PC-3 (cell line): ENCODE measurements at regions of chr2 and their contacts with region 1.

Region 1: DNA sequence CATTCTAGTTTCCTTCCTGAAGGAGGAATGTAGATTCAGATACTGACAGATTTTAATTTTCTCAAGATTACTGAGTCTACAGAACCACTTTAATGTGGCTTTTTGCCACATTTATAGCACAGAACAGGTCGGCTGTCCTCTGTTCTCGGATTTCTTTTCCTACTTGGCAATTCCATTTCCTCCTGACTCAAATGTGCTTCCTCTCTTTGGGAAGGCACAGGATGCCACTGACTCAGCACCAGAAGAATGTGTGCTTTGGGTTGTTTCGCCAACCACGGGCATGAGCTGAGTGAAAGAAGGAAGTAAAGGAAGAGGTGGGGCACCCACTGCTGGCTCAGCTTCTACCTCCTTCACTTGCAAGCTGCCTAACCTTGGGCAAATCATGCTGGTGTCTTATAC is 970.6 kb upstream of the ACVR2A start:
- DNase-seq: peak; percentile 98
- ATAC-seq: peak; percentile 95
- H3K4me3 ChIP-seq: peak overlapping the region; percentile 39
- H3K27ac ChIP-seq: peak overlapping the region; percentile 89
- H3K4me1 ChIP-seq: peaks cover 25% of the 10 kb centered on the region
- H3K27me3 ChIP-seq: no peaks in the 10 kb centered on the region
- CTCF ChIP-seq: no peak

Region 2: GRCh38 chr2:146068051-146068450 is 806.2 kb before region 1 on chr2:
- CTCF ChIA-PET with region 1: no interaction called
- POLR2A ChIA-PET with region 1: no interaction called
- intact Hi-C with region 1: no loop called
- DNase-seq: no peak
- ATAC-seq: no peak
- H3K4me3 ChIP-seq: no peak overlapping the region
- H3K27ac ChIP-seq: no peak overlapping the region
- H3K4me1 ChIP-seq: no peaks in the 10 kb centered on the region
- H3K27me3 ChIP-seq: no peaks in the 10 kb centered on the region
- CTCF ChIP-seq: no peak

Region 3: DNA sequence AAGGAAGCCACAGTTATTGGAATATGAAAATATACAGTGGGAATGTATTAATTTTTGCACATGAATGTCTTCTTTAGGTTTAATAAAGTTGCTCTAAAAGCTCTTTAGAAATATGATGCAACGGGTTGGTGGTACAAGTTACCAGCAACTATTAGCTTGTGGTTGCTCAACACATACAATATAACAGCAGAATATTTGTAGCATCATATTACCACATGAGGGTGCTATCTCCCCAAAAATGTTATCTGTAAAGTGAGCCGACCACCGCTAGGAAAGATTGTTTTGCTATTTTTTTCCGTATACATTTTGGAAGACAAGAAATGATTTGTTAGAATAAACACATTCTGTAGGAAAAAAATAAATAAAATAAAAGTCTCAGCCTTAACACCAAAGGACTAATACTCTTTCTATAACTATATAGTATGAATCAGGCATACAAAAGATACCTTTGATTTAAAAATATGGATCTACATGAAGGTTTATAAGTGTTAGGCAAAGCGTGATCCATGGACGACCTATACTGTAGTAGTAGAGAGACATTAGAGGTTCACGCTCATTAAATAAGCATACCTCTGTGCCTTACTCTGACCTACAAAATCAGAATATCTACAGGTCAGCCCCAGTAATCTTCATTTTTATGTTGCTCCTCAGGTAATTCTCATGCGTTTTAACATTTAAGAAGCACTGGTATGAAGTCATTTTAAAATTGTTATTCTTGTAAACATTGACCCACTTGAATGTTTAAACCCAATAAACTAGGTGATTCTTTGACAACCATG is 140.0 kb before region 1 on chr2:
- CTCF ChIA-PET with region 1: no interaction called
- POLR2A ChIA-PET with region 1: no interaction called
- intact Hi-C with region 1: loop called (anchors 1 kb)
- DNase-seq: peak; percentile 84
- ATAC-seq: peak; percentile 87
- H3K4me3 ChIP-seq: peak overlapping the region; percentile 22; the same call in 1 of the 2 replicates
- H3K27ac ChIP-seq: no peak overlapping the region
- H3K4me1 ChIP-seq: peaks cover 4% of the 10 kb centered on the region; the same call in 1 of the 2 replicates
- H3K27me3 ChIP-seq: no peaks in the 10 kb centered on the region
- CTCF ChIP-seq: peak; percentile 86

Region 4: GRCh38 chr2:146917431-146918042 is 43.3 kb after region 1 on chr2:
- CTCF ChIA-PET with region 1: no interaction called
- POLR2A ChIA-PET with region 1: interaction called, 5 read pairs
- intact Hi-C with region 1: loop called (anchors 1 kb)
- DNase-seq: no peak
- ATAC-seq: no peak
- H3K4me3 ChIP-seq: no peak overlapping the region
- H3K27ac ChIP-seq: no peak overlapping the region
- H3K4me1 ChIP-seq: peaks cover 17% of the 10 kb centered on the region
- H3K27me3 ChIP-seq: no peaks in the 10 kb centered on the region
- CTCF ChIP-seq: no peak